H1 (cell line): ENCODE measurements at regions of chr4 and their contacts with region 1.

Region 1: GRCh38 chr4:25043548-25043947 is 12.8 kb upstream of the LGI2 start:
- DNase-seq: no peak
- H3K4me3 ChIP-seq: no peak overlapping the region
- H3K27ac ChIP-seq: no peak overlapping the region
- H3K4me1 ChIP-seq: no peaks in the 10 kb centered on the region
- H3K27me3 ChIP-seq: no peaks in the 10 kb centered on the region; a peak in 1 of 7 replicates
- CTCF ChIP-seq: no peak
- EP300 ChIP-seq: no peak
- POLR2A ChIP-seq: no peak
- RAD21 ChIP-seq: no peak

Region 2: GRCh38 chr4:25030277-25031076 is 13.1 kb before region 1 on chr4 and contains the start of gene LGI2:
- CTCF ChIA-PET with region 1: interaction called, 50 read pairs
- POLR2A ChIA-PET with region 1: interaction called, 5 read pairs
- DNase-seq: peak in 1 of 2 experiments; percentile 64
- H3K4me3 ChIP-seq: peak within 1 kb of the TSS; percentile 48 to 70 (median 60)
- H3K27ac ChIP-seq: no peak within 1 kb of the TSS
- H3K4me1 ChIP-seq: peaks cover 11 to 14% (median 11%) of the 10 kb centered on the region in 4 experiments
- H3K27me3 ChIP-seq: peaks cover 9 to 34% (median 31%) of the 10 kb centered on the region in 4 experiments
- CTCF ChIP-seq: no peak
- EP300 ChIP-seq: no peak
- POLR2A ChIP-seq: no peak
- RAD21 ChIP-seq: no peak
- total RNA-seq, gene LGI2: 4.0 and 4.8 TPM in 2 replicates

Region 3: DNA sequence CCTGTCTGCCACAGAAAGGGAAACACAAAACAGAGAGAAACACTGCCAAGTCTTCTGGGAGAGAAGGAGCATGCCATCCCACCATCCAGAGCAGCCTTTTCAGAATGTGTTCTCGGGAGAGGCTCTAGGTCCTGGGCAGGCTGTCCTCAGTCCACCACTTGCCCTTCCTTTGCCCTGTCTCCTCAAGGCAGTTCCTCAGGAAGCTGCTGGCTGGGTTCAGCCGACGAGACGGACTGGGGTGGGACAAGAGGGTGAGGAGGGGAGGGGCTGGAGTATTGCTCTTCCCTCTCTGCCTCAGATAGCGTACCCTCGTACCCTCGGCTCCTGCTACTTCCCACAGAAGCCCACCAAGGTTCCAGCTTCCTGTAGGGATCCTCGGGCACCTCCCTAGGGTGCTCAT is 13.8 kb after region 1 on chr4:
- CTCF ChIA-PET with region 1: interaction called, 22 read pairs
- POLR2A ChIA-PET with region 1: no interaction called
- DNase-seq: no peak
- H3K4me3 ChIP-seq: no peak overlapping the region
- H3K27ac ChIP-seq: no peak overlapping the region
- H3K4me1 ChIP-seq: no peaks in the 10 kb centered on the region
- H3K27me3 ChIP-seq: no peaks in the 10 kb centered on the region
- CTCF ChIP-seq: no peak
- EP300 ChIP-seq: no peak
- POLR2A ChIP-seq: no peak
- RAD21 ChIP-seq: no peak

Region 4: DNA sequence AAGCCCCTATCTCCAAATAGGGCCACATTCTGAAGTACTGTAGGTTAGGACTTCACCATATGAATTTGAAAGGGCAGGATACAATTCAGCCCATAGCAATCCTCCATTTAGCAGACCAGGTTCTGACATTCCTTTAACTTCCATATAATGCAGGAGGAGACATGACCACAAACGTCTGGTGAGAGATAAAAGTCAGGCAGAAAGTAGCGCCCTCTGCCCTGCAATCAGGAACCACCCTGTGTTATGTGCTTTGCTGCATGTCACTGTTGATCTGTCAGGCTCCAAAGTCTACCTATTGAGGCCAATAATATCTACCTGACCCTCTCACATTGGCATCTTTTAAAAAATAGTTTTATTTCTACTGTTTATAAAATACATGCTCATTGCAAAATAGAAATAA is 146.9 kb after region 1 on chr4:
- CTCF ChIA-PET with region 1: no interaction called
- POLR2A ChIA-PET with region 1: no interaction called
- DNase-seq: no peak
- H3K4me3 ChIP-seq: no peak overlapping the region
- H3K27ac ChIP-seq: no peak overlapping the region
- H3K4me1 ChIP-seq: no peaks in the 10 kb centered on the region
- H3K27me3 ChIP-seq: no peaks in the 10 kb centered on the region
- CTCF ChIP-seq: peak; percentile 19 to 56 (median 40); a peak in 2 of 4 replicates
- EP300 ChIP-seq: no peak
- POLR2A ChIP-seq: no peak
- RAD21 ChIP-seq: peak; percentile 29 to 40; a peak in 1 of 4 replicates